CD4-positive, alpha-beta T cell (primary cell): ENCODE measurements at regions of chr13 and their contacts with region 1.

Region 1: DNA sequence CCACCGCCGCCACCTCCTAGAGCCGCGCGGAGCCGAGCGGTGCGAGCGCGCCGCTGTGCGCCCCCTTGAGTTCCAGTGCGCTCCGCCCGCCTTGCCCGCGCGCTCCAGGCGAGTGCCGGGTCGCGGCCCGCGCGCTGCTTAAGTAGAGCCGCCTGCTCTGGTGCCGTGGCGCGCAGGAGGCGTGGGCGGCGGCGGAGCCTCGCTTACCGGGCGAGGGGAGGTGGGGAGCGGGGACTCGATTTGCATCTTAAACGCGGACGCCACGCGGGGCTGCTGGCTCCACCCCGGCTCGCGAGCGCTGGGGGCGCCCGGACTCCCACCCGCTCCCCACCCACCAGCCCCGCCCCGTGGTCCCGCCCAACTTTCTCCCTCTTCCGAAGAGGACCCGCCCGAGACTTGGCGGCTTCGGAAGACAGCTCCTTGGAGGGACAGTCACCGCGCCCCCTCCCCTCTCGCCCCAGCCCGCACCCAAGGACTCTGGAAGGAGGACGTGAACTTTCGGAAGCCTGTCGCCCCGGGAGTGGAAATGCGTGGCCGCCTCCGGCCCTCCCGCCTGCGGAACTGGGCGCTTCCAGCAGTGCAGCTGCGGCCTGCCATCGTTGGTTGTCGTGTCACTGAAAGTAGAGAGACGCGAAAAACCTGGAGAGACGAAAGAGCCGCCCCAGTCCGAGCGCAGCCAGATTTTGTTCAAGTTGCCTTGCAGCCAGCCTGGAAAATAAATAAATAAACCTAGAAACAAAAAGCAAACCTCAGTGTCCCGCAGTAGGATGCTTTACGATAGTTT is at the start of gene KCTD12:
- DNase-seq: peak; percentile 54 to 91 (median 72)
- ATAC-seq: peak; percentile 76
- H3K4me3 ChIP-seq: peak within 1 kb of the TSS; percentile 85
- H3K4me3 Mint-ChIP-seq: peak within 1 kb of the TSS; percentile 91
- H3K27ac ChIP-seq: peak within 1 kb of the TSS in 1 of 2 donors; percentile 24
- H3K27ac Mint-ChIP-seq: peak within 1 kb of the TSS; percentile 82
- H3K4me1 ChIP-seq: peaks cover 28% of the 10 kb centered on the region
- H3K4me1 Mint-ChIP-seq: peaks cover 38% of the 10 kb centered on the region
- H3K27me3 ChIP-seq: peaks cover 0 to 3% of the 10 kb centered on the region in 2 experiments
- H3K27me3 Mint-ChIP-seq: peaks cover 7% of the 10 kb centered on the region
- CTCF ChIP-seq: no peak
- total RNA-seq, gene KCTD12: 4.8 to 4.9 TPM

Region 2: GRCh38 chr13:75635828-75636435 is 1250.6 kb before region 1 on chr13 and contains the start of gene LMO7:
- CTCF ChIA-PET with region 1: no interaction called
- POLR2A ChIA-PET with region 1: no interaction called
- intact Hi-C with region 1: loop called in 1 of 2 experiments (anchors 5 kb)
- DNase-seq: peak; percentile 11 to 77 (median 42)
- ATAC-seq: peak; percentile 56
- H3K4me3 ChIP-seq: peak within 1 kb of the TSS; percentile 70
- H3K4me3 Mint-ChIP-seq: peak within 1 kb of the TSS; percentile 90
- H3K27ac ChIP-seq: no peak within 1 kb of the TSS
- H3K27ac Mint-ChIP-seq: peak within 1 kb of the TSS; percentile 84
- H3K4me1 ChIP-seq: peaks cover 15% of the 10 kb centered on the region
- H3K4me1 Mint-ChIP-seq: peaks cover 24% of the 10 kb centered on the region
- H3K27me3 ChIP-seq: no peaks in the 10 kb centered on the region
- H3K27me3 Mint-ChIP-seq: peaks cover 10% of the 10 kb centered on the region
- CTCF ChIP-seq: no peak
- total RNA-seq, gene LMO7: 35.2 to 36.3 TPM

Region 3: DNA sequence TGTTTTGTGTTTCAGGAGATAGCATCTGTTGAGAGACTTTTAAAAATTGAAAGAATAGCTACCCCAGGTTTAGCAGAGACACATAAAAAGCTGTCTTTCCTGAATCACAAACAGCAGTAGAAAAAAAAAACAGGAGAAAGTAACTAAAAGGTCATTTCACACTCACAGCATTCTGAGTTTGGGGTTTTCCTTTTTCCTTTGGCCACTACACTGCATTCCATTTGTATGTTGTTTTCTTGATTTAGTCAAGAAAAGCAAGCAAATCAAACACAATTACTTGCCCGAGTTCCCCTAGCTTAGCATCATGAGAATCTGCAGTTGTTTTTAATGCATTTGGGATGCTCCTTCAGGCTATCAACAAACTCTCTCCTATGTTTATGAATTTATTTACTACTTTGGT is 161.3 kb before region 1 on chr13:
- CTCF ChIA-PET with region 1: no interaction called
- POLR2A ChIA-PET with region 1: interaction called, 8 read pairs
- intact Hi-C with region 1: loop called in 1 of 2 experiments (anchors 5 kb)
- DNase-seq: no peak
- ATAC-seq: no peak
- H3K4me3 ChIP-seq: no peak overlapping the region
- H3K4me3 Mint-ChIP-seq: no peak overlapping the region
- H3K27ac ChIP-seq: no peak overlapping the region
- H3K27ac Mint-ChIP-seq: peak overlapping the region; percentile 18
- H3K4me1 ChIP-seq: peaks cover 7% of the 10 kb centered on the region
- H3K4me1 Mint-ChIP-seq: no peaks in the 10 kb centered on the region
- H3K27me3 ChIP-seq: no peaks in the 10 kb centered on the region
- H3K27me3 Mint-ChIP-seq: no peaks in the 10 kb centered on the region
- CTCF ChIP-seq: no peak

Region 4: DNA sequence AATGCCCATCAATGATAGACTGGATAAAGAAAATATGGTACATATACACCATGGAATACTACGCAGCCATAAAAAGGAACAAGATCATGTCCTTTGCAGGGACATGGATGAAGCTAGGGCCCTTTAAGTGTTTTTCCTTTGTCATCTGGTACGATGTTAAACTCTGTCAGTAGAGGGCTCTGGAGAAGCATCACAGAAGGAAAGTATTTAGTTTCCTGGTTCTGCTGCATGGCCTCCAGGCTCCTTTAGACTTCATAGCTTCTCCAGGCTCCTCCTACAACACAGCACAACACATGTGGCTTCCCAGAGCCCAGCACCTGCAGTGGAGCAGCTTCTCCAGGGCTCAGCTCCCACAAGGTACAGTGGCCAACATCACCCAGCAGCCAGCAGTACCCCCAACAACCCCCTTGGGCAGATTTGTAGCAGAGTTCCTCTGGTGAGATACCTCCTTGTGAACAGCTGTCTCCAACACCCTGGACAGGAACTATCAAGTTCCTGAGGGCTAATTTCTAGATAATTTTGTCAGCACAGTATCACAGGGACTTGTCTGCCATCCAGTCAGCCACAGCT is 63.7 kb before region 1 on chr13:
- CTCF ChIA-PET with region 1: interaction called, 10 read pairs
- POLR2A ChIA-PET with region 1: interaction called, 11 read pairs
- intact Hi-C with region 1: loop called in 1 of 2 experiments (anchors 1 kb)
- DNase-seq: peak in 4 of 14 experiments; percentile 6 to 53 (median 27)
- ATAC-seq: peak; percentile 76
- H3K4me3 ChIP-seq: no peak overlapping the region
- H3K4me3 Mint-ChIP-seq: no peak overlapping the region
- H3K27ac ChIP-seq: no peak overlapping the region
- H3K27ac Mint-ChIP-seq: no peak overlapping the region
- H3K4me1 ChIP-seq: no peaks in the 10 kb centered on the region
- H3K4me1 Mint-ChIP-seq: no peaks in the 10 kb centered on the region
- H3K27me3 ChIP-seq: no peaks in the 10 kb centered on the region
- H3K27me3 Mint-ChIP-seq: peaks cover 11% of the 10 kb centered on the region
- CTCF ChIP-seq: no peak

Region 5: DNA sequence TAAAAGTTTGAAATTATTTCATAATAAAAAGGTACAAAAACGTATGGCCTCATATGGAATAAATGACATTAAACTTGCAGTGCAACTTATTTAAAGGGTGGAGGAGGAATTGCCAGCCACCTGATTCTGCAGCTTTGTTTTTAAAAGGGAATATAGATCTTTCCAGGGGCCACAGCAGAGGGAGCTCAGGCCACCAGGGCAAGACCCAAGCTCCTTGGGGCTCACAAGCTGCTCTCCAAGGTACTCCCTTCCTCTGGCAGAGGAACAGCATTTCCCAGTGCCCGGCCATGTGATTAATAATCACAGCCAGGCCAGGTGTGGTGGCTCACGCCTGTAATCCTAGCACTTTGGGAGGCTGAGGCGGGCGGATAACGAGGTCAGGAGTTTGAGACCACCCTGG is 68.1 kb after region 1 on chr13:
- CTCF ChIA-PET with region 1: no interaction called
- POLR2A ChIA-PET with region 1: no interaction called
- intact Hi-C with region 1: no loop called
- DNase-seq: no peak
- ATAC-seq: no peak
- H3K4me3 ChIP-seq: no peak overlapping the region
- H3K4me3 Mint-ChIP-seq: no peak overlapping the region
- H3K27ac ChIP-seq: no peak overlapping the region
- H3K27ac Mint-ChIP-seq: no peak overlapping the region
- H3K4me1 ChIP-seq: no peaks in the 10 kb centered on the region
- H3K4me1 Mint-ChIP-seq: no peaks in the 10 kb centered on the region
- H3K27me3 ChIP-seq: peaks cover 3 to 5% of the 10 kb centered on the region in 2 experiments
- H3K27me3 Mint-ChIP-seq: peaks cover 24% of the 10 kb centered on the region
- CTCF ChIP-seq: no peak

Region 6: GRCh38 chr13:76991796-76992547 is 105.5 kb after region 1 on chr13 and contains the start of gene CLN5:
- CTCF ChIA-PET with region 1: no interaction called
- POLR2A ChIA-PET with region 1: interaction called, 35 read pairs
- intact Hi-C with region 1: loop called (anchors 5 kb)
- DNase-seq: peak; percentile 89 to 99 (median 95)
- ATAC-seq: peak; percentile 85
- H3K4me3 ChIP-seq: peak within 1 kb of the TSS; percentile 72
- H3K4me3 Mint-ChIP-seq: peak within 1 kb of the TSS; percentile 97
- H3K27ac ChIP-seq: peak within 1 kb of the TSS; percentile 89 to 95
- H3K27ac Mint-ChIP-seq: peak within 1 kb of the TSS; percentile 99
- H3K4me1 ChIP-seq: peaks cover 30% of the 10 kb centered on the region
- H3K4me1 Mint-ChIP-seq: peaks cover 60% of the 10 kb centered on the region
- H3K27me3 ChIP-seq: no peaks in the 10 kb centered on the region
- H3K27me3 Mint-ChIP-seq: no peaks in the 10 kb centered on the region
- CTCF ChIP-seq: no peak
- total RNA-seq, gene CLN5: 37.4 to 42.9 TPM